ENCODE measurements at regions of chr20 and their contacts with region 1.

Region 1: GRCh38 chr20:50625986-50626677 is 65.2 kb downstream of the RIPOR3 start:
- DNase-seq: peak; percentile 71 to 86
- ATAC-seq: peak; percentile 68 to 82 (median 81)
- H3K4me3 ChIP-seq: no peak overlapping the region
- H3K27ac ChIP-seq: peak overlapping the region; percentile 50
- H3K4me1 ChIP-seq: peaks cover 9% of the 10 kb centered on the region
- H3K27me3 ChIP-seq: no peaks in the 10 kb centered on the region
- CTCF ChIP-seq: peak; percentile 52

Region 2: GRCh38 chr20:50713657-50714101 is 87.5 kb after region 1 on chr20:
- intact Hi-C with region 1: loop called in 1 of 2 experiments (anchors 5 kb)
- DNase-seq: no peak
- ATAC-seq: peak in 2 of 4 donors; percentile 39 to 40
- H3K4me3 ChIP-seq: no peak overlapping the region
- H3K27ac ChIP-seq: no peak overlapping the region
- H3K4me1 ChIP-seq: peaks cover 8% of the 10 kb centered on the region
- H3K27me3 ChIP-seq: no peaks in the 10 kb centered on the region
- CTCF ChIP-seq: peak; percentile 15